T-cell (primary cell): ENCODE measurements at regions of chr14 and their contacts with region 1.

Region 1: DNA sequence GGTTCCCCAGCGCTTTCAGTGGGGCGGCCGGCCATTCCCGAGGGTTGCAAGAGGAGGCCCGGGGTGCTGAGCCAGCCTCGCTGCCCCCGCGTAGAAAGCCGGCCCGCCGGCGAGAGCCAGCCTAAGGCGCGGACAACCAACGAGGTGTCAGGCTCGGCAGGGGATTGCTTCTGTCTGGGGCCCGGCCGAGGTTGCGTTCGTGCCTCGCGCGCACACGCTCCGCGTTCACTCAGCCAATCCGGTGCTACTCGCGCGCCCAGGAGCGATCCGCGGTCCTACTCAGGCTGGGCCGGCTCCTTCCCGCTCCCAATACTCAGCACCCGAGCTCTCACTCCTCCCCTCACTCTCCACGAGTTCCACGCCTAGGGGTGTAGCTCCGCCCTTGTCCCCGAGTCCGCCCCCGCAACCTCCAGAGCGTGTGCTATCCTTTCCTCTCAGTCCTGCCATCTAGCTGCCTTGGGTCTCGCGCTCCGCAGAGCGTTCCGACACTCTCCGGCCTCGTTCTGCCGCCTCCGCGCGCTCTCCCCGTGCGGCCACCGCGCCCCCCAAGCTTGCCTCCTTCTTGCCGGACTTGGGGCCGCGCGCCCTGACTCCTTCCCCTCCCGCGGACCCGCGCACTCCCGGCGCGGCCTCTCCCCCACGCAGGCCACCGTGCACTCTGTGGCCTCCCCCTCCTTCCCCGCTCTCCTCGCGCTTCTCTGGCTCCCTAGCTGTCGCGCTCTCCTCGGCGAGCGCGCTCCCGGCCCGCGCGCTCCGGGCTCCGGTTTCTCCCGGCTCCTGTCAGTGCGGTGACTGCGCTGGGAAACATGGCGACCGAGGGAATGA is at the start of gene GPHN:
- DNase-seq: peak; percentile 60 to 89 (median 74)
- ATAC-seq: peak; percentile 87 to 91 (median 88)
- H3K4me3 ChIP-seq: peak within 1 kb of the TSS; percentile 80 to 97
- H3K4me3 Mint-ChIP-seq: peak within 1 kb of the TSS; percentile 89 to 97 (median 97)
- H3K27ac ChIP-seq: peak within 1 kb of the TSS; percentile 71
- H3K27ac Mint-ChIP-seq: peak within 1 kb of the TSS; percentile 84 to 94
- H3K4me1 ChIP-seq: peaks cover 3 to 26% of the 10 kb centered on the region in 2 experiments
- H3K4me1 Mint-ChIP-seq: peaks cover 40 to 42% (median 40%) of the 10 kb centered on the region in 3 donors
- H3K27me3 ChIP-seq: peaks cover 0 to 8% of the 10 kb centered on the region in 2 experiments
- H3K27me3 Mint-ChIP-seq: peaks cover 0 to 2% of the 10 kb centered on the region in 2 donors
- total RNA-seq, gene GPHN: 13.9 to 21.1 (median 14.4) TPM

Region 2: DNA sequence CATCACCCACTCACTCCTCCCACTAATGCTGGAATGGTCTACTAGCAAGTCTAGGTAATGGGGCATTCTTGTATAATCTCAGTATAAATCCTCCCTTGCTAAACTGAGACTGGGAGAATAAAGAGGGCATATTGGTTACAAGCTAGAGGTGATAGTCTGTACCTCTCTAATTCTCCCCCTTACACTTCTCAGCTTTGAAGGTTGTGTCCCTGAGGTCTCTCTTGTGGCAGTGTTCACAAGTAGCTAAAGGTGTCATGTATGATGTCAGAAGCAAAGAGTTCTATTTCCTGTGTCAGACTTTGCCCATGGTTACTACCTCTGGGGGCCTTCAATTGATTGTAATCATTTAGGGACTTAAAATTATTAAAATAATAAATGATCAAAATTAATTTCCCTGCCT is 48.3 kb before region 1 on chr14:
- CTCF ChIA-PET with region 1: no interaction called
- POLR2A ChIA-PET with region 1: interaction called in 1 of 2 experiments, 10 read pairs
- DNase-seq: peak in 1 of 35 experiments; percentile 2
- ATAC-seq: no peak
- H3K4me3 ChIP-seq: no peak overlapping the region
- H3K4me3 Mint-ChIP-seq: no peak overlapping the region
- H3K27ac ChIP-seq: no peak overlapping the region
- H3K27ac Mint-ChIP-seq: no peak overlapping the region
- H3K4me1 ChIP-seq: no peaks in the 10 kb centered on the region
- H3K4me1 Mint-ChIP-seq: no peaks in the 10 kb centered on the region
- H3K27me3 ChIP-seq: no peaks in the 10 kb centered on the region
- H3K27me3 Mint-ChIP-seq: peaks cover 0 to 3% of the 10 kb centered on the region in 2 donors

Region 3: GRCh38 chr14:66496188-66496807 is 11.6 kb before region 1 on chr14:
- CTCF ChIA-PET with region 1: interaction called, 5 to 10 read pairs
- POLR2A ChIA-PET with region 1: no interaction called
- DNase-seq: no peak
- ATAC-seq: no peak
- H3K4me3 ChIP-seq: no peak overlapping the region
- H3K4me3 Mint-ChIP-seq: peak overlapping the region in 1 of 3 donors; percentile 20
- H3K27ac ChIP-seq: no peak overlapping the region
- H3K27ac Mint-ChIP-seq: peak overlapping the region; percentile 59 to 86
- H3K4me1 ChIP-seq: peaks cover 0 to 7% of the 10 kb centered on the region in 2 experiments
- H3K4me1 Mint-ChIP-seq: peaks cover 18 to 20% (median 18%) of the 10 kb centered on the region in 3 donors
- H3K27me3 ChIP-seq: no peaks in the 10 kb centered on the region
- H3K27me3 Mint-ChIP-seq: no peaks in the 10 kb centered on the region